ENCODE measurements at regions of chr6 and their contacts with region 1.

Region 1: DNA sequence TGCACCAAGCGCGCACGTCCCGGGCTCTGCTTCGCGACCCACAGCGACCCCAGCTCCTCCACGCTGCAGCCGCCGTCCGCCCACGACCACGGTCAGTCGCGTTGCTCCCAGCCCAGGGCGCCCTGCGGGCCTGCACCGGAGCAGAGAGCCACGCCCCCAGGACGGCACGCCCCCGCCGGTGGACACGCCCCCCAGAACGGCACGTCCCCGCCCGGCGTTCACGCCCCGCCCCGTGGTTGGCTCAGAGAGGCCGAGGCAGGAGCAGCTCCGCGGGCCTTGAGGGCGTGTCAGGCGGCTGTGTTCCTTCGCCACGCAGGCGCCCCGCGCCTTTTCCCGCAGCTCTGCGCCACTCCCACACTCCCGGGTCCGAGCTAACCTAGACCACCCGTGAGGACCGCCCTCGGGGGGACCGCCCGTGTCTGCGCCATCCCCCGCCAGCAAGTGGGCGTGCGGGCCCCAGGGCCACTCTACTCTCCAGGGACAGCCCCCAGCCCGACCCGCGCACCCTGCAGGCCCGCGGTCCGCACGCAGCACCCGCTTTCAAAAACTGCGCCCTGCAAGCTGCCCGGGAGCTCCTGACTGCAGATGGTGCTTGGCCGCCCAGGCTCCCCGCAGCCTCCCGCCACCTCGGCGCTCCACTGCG is at the start of gene RNASET2:
- DNase-seq: peak; percentile 99
- H3K4me3 Mint-ChIP-seq: peak within 1 kb of the TSS; percentile 89
- H3K27ac Mint-ChIP-seq: peak within 1 kb of the TSS; percentile 94
- H3K4me1 Mint-ChIP-seq: peaks cover 73% of the 10 kb centered on the region
- H3K27me3 Mint-ChIP-seq: no peaks in the 10 kb centered on the region
- total RNA-seq, gene RNASET2: 62.5 to 66.1 TPM

Region 2: DNA sequence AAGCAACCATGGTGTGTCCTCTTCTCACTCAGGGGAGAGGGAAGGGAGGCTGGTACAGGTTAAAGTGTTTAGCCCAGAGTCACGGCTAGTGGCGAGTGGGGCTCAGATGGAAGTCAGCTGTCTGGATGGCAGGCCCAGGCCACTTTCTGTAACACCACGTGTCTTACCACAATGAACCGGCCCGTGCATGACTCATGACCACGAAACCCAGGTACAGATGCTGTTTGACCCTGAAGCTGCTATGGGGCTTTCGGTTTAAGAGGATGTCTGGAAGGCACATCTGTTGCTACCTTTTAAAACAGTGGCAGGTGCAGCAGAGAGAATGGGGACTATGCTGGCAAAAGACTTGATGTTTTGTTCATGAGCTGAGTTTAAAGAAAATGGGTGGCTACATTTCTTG is 537.3 kb before region 1 on chr6:
- CTCF ChIA-PET with region 1: no interaction called
- POLR2A ChIA-PET with region 1: no interaction called
- intact Hi-C with region 1: loop called (anchors 10 kb)
- DNase-seq: peak; percentile 82
- H3K4me3 Mint-ChIP-seq: peak overlapping the region; percentile 4
- H3K27ac Mint-ChIP-seq: peak overlapping the region; percentile 73
- H3K4me1 Mint-ChIP-seq: peaks cover 62% of the 10 kb centered on the region
- H3K27me3 Mint-ChIP-seq: no peaks in the 10 kb centered on the region

Region 3: GRCh38 chr6:166488076-166488685 is 468.4 kb before region 1 on chr6:
- CTCF ChIA-PET with region 1: no interaction called
- POLR2A ChIA-PET with region 1: no interaction called
- intact Hi-C with region 1: loop called (anchors 10 kb)
- DNase-seq: peak; percentile 86
- H3K4me3 Mint-ChIP-seq: peak overlapping the region; percentile 71
- H3K27ac Mint-ChIP-seq: peak overlapping the region; percentile 97
- H3K4me1 Mint-ChIP-seq: peaks cover 20% of the 10 kb centered on the region
- H3K27me3 Mint-ChIP-seq: no peaks in the 10 kb centered on the region

Region 4: GRCh38 chr6:166942393-166943168 is 14.0 kb before region 1 on chr6:
- CTCF ChIA-PET with region 1: interaction called, 50 read pairs
- POLR2A ChIA-PET with region 1: interaction called, 41 read pairs
- intact Hi-C with region 1: loop called (anchors 1 kb)
- DNase-seq: peak; percentile 91
- H3K4me3 Mint-ChIP-seq: peak overlapping the region; percentile 49
- H3K27ac Mint-ChIP-seq: peak overlapping the region; percentile 95
- H3K4me1 Mint-ChIP-seq: peaks cover 45% of the 10 kb centered on the region
- H3K27me3 Mint-ChIP-seq: no peaks in the 10 kb centered on the region

Region 5: GRCh38 chr6:166989427-166990032 is 33.0 kb after region 1 on chr6:
- CTCF ChIA-PET with region 1: interaction called, 39 read pairs
- POLR2A ChIA-PET with region 1: interaction called, 6 read pairs
- intact Hi-C with region 1: loop called (anchors 2 kb)
- DNase-seq: peak; percentile 53
- H3K4me3 Mint-ChIP-seq: no peak overlapping the region
- H3K27ac Mint-ChIP-seq: no peak overlapping the region
- H3K4me1 Mint-ChIP-seq: peaks cover 24% of the 10 kb centered on the region
- H3K27me3 Mint-ChIP-seq: no peaks in the 10 kb centered on the region

Region 6: GRCh38 chr6:166999145-166999883 is 42.7 kb after region 1 on chr6 and contains the start of gene CEP43:
- CTCF ChIA-PET with region 1: interaction called, 9 read pairs
- POLR2A ChIA-PET with region 1: interaction called, 18 read pairs
- intact Hi-C with region 1: loop called (anchors 1 kb)
- DNase-seq: peak; percentile 90
- H3K4me3 Mint-ChIP-seq: peak within 1 kb of the TSS; percentile 85
- H3K27ac Mint-ChIP-seq: peak within 1 kb of the TSS; percentile 85
- H3K4me1 Mint-ChIP-seq: peaks cover 28% of the 10 kb centered on the region
- H3K27me3 Mint-ChIP-seq: no peaks in the 10 kb centered on the region
- total RNA-seq, gene CEP43: 19.5 to 21.3 TPM

Region 7: DNA sequence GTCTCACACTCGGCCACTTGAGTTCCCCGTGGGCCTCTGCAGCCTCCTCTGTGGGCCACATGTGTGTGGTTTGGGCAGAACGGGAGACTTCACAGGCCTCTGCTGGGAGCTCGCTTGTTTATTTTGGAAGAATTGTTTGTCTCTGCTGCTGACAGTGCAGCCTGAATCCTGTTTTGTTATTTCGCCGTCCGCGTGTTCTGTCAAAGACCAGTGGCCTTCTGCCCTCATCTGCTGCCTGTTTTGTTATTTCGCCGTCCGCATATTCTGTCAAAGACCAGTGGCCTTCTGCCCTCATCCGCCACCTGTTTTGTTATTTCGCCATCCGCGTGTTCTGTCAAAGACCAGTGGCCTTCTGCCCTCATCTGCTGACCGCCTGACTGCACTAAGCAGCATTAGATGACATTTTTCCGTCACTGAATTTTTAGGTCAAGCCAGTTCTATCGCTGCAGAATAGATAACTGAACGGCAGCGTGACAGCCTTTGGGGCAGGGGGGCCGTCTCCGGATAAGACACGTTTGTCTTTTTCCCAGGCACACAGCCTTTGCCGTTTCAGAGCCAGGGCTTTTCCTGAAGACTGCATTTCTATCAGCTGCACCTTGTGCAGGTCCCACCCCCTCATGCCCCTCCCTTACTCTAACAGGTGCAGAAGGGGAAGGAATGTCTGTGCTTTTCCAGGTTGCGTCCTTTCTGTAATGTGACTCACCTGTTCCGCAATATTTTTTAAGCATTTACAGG is 711.6 kb after region 1 on chr6:
- CTCF ChIA-PET with region 1: no interaction called
- POLR2A ChIA-PET with region 1: no interaction called
- intact Hi-C with region 1: no loop called
- DNase-seq: no peak
- H3K4me3 Mint-ChIP-seq: no peak overlapping the region
- H3K27ac Mint-ChIP-seq: no peak overlapping the region
- H3K4me1 Mint-ChIP-seq: no peaks in the 10 kb centered on the region
- H3K27me3 Mint-ChIP-seq: no peaks in the 10 kb centered on the region